AG04450 (cell line): ENCODE measurements at regions of chr2 and their contacts with region 1.

Region 1: GRCh38 chr2:130372055-130372832 is 16.4 kb downstream of the PTPN18 start:
- DNase-seq: peak; percentile 52
- H3K4me3 ChIP-seq: peak overlapping the region; percentile 89
- H3K27ac ChIP-seq: peak overlapping the region; percentile 65
- H3K27me3 ChIP-seq: no peaks in the 10 kb centered on the region
- CTCF ChIP-seq: peak; percentile 79

Region 2: DNA sequence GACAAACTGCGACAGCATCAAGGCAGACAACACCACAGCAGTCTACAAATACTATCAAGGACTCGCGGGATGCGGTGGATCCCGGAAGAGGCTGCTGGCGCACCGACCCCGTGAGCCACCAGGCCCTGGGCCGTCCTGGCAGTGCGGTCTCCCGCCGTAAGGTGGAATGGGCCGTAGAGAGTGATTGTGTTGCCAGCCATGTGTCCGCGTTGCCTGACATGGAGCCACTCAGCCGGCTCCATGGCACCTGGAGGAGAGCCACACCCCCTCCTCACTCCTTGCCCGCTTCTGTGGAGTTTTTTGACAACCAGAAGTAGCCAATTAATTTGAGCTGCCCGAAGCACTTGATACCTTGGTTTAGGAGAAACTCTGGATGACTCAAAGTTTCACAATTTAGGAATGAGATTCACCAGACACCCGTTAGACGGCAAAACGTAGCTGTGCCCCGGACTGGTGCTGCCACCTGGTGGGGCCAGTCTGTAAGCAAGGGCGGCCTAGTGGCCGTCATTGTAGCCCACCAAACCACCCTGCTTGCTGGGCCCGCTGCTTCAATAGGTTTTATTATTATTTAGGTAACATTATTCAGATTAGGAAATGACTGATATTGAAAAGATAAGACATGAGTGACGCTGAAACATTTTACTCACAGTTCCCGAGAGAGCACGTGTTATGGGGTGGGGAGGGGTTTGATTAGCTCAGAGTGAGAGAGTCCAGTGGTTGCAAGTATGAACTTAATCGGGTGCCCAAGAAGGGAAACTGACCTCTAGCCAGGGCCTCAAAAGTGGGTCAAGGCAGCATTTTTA is 39.8 kb before region 1 on chr2:
- CTCF ChIA-PET with region 1: interaction called, 20 read pairs
- POLR2A ChIA-PET with region 1: interaction called, 5 read pairs
- DNase-seq: no peak
- H3K4me3 ChIP-seq: no peak overlapping the region
- H3K27ac ChIP-seq: no peak overlapping the region
- H3K27me3 ChIP-seq: peaks cover 10% of the 10 kb centered on the region
- CTCF ChIP-seq: peak; percentile 99

Region 3: DNA sequence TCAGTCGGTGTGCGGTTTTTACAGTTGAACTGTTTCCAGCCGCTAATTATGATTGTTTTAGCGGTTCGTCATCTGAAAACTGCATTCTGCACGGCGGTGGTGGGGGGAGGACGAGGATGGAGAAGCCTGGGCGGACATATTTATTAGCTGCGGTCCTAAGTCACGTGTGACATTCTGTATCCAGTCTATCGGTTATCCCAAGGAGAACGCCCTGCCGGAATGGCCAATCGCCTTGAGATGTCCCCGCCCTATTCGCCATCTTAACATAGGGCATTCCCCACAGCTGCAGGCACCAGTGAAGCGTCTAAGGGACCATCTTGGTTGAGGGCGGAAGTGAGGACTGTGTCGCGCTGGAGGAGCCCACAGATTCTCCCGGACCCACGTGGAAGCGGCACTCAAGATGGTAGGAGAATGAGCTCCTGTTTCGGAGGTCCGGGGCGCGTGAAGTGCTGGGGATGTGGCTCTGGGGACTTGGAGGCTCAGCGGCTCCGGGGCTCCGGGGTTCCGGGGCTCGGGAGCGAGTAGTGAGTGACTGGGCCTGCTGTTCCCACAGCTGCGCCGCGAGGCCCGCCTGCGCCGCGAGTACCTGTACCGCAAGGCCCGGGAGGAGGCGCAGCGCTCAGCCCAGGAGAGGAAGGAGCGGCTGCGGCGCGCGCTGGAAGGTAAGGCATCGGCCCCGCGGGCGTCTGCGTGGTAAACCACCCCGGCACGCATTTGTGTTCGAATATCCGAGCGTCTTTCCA is 29.5 kb before region 1 on chr2 and contains the start of gene IMP4:
- CTCF ChIA-PET with region 1: interaction called, 11 read pairs
- POLR2A ChIA-PET with region 1: interaction called, 4 read pairs
- DNase-seq: peak; percentile 98
- H3K4me3 ChIP-seq: peak within 1 kb of the TSS; percentile 95
- H3K27ac ChIP-seq: peak within 1 kb of the TSS; percentile 94
- H3K27me3 ChIP-seq: no peaks in the 10 kb centered on the region
- CTCF ChIP-seq: peak; percentile 42
- polyA plus RNA-seq, gene IMP4: 51.0 and 79.5 TPM in 2 replicates

Region 4: GRCh38 chr2:130355578-130356431 is 16.4 kb before region 1 on chr2 and contains the start of gene PTPN18:
- CTCF ChIA-PET with region 1: interaction called, 11 read pairs
- POLR2A ChIA-PET with region 1: interaction called, 3 read pairs
- DNase-seq: peak; percentile 61
- H3K4me3 ChIP-seq: peak within 1 kb of the TSS; percentile 68
- H3K27ac ChIP-seq: no peak within 1 kb of the TSS
- H3K27me3 ChIP-seq: no peaks in the 10 kb centered on the region
- CTCF ChIP-seq: peak; percentile 50
- polyA plus RNA-seq, gene PTPN18: 10.1 and 11.6 TPM in 2 replicates

Region 5: GRCh38 chr2:130385709-130386108 is 13.5 kb after region 1 on chr2:
- CTCF ChIA-PET with region 1: interaction called, 29 read pairs
- POLR2A ChIA-PET with region 1: interaction called, 5 read pairs
- DNase-seq: no peak
- H3K4me3 ChIP-seq: no peak overlapping the region
- H3K27ac ChIP-seq: no peak overlapping the region
- H3K27me3 ChIP-seq: no peaks in the 10 kb centered on the region
- CTCF ChIP-seq: no peak

Region 6: DNA sequence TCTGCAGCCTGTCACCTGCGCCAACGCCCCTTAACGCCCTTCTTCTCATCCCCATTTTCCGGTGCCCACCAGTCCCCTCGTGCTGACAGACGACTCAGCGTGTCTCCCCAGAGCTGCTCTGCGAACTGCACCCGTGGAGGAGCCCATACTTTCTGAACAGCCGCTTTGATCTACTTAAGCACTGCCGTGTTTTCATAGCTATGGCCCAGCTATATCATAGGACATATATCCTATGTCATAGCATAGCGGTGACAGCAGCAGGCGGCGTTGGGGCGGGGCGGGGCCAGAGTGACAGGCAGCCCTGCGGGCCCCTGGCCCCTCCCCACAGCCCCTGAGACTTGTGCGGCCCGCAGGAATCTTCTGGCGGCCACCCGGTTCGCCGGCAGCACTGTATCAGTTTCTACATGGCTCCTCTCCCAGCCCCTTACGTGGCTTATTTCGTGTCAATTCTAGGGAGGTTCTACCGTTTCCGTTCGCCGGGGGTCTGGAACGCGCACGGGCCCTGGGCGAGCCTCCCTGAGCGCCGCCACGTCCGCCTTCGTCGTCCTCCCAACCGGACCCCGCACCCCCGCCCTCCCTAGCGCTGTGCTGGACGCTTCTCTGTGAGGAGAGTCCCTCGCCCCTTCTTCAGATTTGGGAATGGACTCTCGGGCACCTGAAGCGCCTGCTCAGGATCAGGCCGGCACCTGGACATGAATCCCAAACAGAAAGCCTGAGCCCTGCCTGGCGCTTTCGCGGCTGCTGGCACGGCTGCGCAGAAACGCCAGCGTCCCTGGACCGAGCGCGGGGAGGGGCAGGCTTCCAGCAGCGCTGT is 19.0 kb after region 1 on chr2:
- CTCF ChIA-PET with region 1: interaction called, 29 read pairs
- POLR2A ChIA-PET with region 1: interaction called, 5 read pairs
- DNase-seq: no peak
- H3K4me3 ChIP-seq: peak overlapping the region; percentile 75
- H3K27ac ChIP-seq: peak overlapping the region; percentile 80
- H3K27me3 ChIP-seq: no peaks in the 10 kb centered on the region
- CTCF ChIP-seq: no peak

Region 7: GRCh38 chr2:130807659-130808385 is 435.6 kb after region 1 on chr2:
- CTCF ChIA-PET with region 1: no interaction called
- POLR2A ChIA-PET with region 1: interaction called, 10 read pairs
- DNase-seq: no peak
- H3K4me3 ChIP-seq: no peak overlapping the region
- H3K27ac ChIP-seq: no peak overlapping the region
- H3K27me3 ChIP-seq: no peaks in the 10 kb centered on the region
- CTCF ChIP-seq: no peak

Region 8: GRCh38 chr2:130981667-130982066 is 609.4 kb after region 1 on chr2:
- CTCF ChIA-PET with region 1: no interaction called
- POLR2A ChIA-PET with region 1: no interaction called
- DNase-seq: no peak
- H3K4me3 ChIP-seq: no peak overlapping the region
- H3K27ac ChIP-seq: no peak overlapping the region
- H3K27me3 ChIP-seq: no peaks in the 10 kb centered on the region
- CTCF ChIP-seq: no peak